A549 (cell line): ENCODE measurements at regions of chr3 and their contacts with region 1.

Region 1: GRCh38 chr3:37979541-37980461 is 10.8 kb upstream of the VILL start:
- DNase-seq: no peak
- ATAC-seq: no peak
- H3K4me3 ChIP-seq: no peak overlapping the region
- H3K27ac ChIP-seq: no peak overlapping the region
- H3K4me1 ChIP-seq: no peaks in the 10 kb centered on the region
- CTCF ChIP-seq: no peak
- EP300 ChIP-seq: no peak
- POLR2A ChIP-seq: no peak
- RAD21 ChIP-seq: no peak

Region 2: DNA sequence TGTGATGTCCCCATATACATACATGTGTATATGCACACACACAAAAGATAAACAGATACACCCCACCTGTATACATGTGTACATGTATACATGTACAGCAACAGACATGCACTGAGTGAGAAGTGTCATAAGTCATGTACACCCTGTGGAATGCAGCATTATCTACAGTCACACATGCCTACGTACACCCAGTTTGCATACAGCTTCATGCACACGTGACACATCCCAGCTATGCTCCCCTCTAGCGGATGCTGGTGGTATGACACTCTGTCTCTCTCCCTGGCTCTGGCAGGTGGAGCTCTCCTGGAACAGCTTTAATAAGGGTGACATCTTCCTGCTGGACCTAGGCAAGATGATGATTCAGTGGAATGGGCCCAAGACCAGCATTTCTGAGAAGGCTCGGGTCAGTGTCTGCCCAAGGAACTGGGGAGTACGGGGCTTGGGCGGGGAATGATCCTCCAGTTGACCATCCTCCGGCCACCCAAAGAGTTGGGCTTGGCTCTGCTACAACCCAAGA is 17.0 kb after region 1 on chr3:
- CTCF ChIA-PET with region 1: interaction called, 30 read pairs
- POLR2A ChIA-PET with region 1: no interaction called
- DNase-seq: peak; percentile 86 to 90
- ATAC-seq: peak; percentile 44 to 78; a peak in 4 of 6 replicates
- H3K4me3 ChIP-seq: no peak overlapping the region
- H3K27ac ChIP-seq: no peak overlapping the region
- H3K4me1 ChIP-seq: peaks cover 11% of the 10 kb centered on the region
- CTCF ChIP-seq: peak; percentile 68
- EP300 ChIP-seq: no peak
- POLR2A ChIP-seq: no peak
- RAD21 ChIP-seq: peak; percentile 28 to 41; a peak in 4 of 5 replicates

Region 3: GRCh38 chr3:38004415-38005076 is 24.7 kb after region 1 on chr3:
- CTCF ChIA-PET with region 1: interaction called, 30 read pairs
- POLR2A ChIA-PET with region 1: no interaction called
- DNase-seq: peak; percentile 55 to 76
- ATAC-seq: peak; percentile 75 to 88
- H3K4me3 ChIP-seq: no peak overlapping the region
- H3K27ac ChIP-seq: no peak overlapping the region
- H3K4me1 ChIP-seq: peaks cover 4% of the 10 kb centered on the region; the same call in 1 of the 3 replicates
- CTCF ChIP-seq: peak; percentile 72
- EP300 ChIP-seq: no peak
- POLR2A ChIP-seq: no peak
- RAD21 ChIP-seq: peak; percentile 51 to 62